Activated T-helper 1 cell treated with anti-CD3 and anti-CD28 coated beads, Interleukin-12 subunit alpha, Interleukin-12 subunit beta, Interleukin-2, Interleukin-4 antibody, amounts not matched to agents 30 ng/mL and 10 ng/mL and 1 ng/mL, durations not matched to agents 14 hours and 24 hours and 36 hours (primary cell): ENCODE measurements at regions of chr20 and their contacts with region 1.

Region 1: DNA sequence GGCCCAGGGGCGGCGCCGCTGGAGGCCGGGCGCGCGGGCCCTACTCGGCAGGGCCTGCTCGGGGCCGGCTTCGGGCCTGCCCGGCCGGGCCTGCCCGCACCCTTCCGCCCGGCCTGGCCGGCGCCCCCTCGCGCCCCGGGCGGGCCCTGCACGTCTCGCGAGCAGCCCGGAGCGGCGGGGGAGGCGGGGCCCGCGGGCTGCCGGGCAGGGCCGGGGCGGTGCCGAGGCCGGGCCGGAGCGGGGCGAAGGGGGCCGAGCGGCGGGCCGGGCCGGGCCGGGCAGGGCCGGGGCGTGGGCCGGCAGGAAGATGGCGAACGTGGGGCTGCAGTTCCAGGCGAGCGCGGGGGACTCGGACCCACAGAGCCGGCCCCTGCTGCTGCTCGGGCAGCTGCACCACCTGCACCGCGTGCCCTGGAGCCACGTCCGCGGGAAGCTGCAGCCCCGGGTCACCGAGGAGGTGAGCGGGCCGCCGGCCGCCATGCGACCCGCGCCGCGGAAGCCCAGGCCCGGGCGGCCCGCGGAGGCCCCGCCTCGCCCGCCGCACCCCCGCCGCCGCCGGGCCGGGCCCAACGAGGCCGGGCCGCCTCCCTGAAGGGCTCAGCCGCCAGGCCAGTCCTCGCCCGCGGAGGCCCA is at the start of gene NPEPL1:
- DNase-seq: peak; percentile 62
- H3K4me3 Mint-ChIP-seq: peak within 1 kb of the TSS; percentile 82
- H3K27ac Mint-ChIP-seq: peak within 1 kb of the TSS; percentile 81
- H3K4me1 Mint-ChIP-seq: peaks cover 10% of the 10 kb centered on the region
- H3K27me3 Mint-ChIP-seq: no peaks in the 10 kb centered on the region
- total RNA-seq, gene NPEPL1: 20.6 and 22.9 TPM in 2 replicates

Region 2: GRCh38 chr20:57398231-57398821 is 1294.4 kb before region 1 on chr20:
- intact Hi-C with region 1: loop called (anchors 5 kb)
- DNase-seq: peak; percentile 69
- H3K4me3 Mint-ChIP-seq: peak overlapping the region; percentile 85
- H3K27ac Mint-ChIP-seq: peak overlapping the region; percentile 94
- H3K4me1 Mint-ChIP-seq: peaks cover 62% of the 10 kb centered on the region
- H3K27me3 Mint-ChIP-seq: no peaks in the 10 kb centered on the region

Region 3: GRCh38 chr20:58659841-58660240 is 32.9 kb before region 1 on chr20:
- intact Hi-C with region 1: loop called (anchors 2 kb)
- DNase-seq: no peak
- H3K4me3 Mint-ChIP-seq: peak overlapping the region; percentile 76
- H3K27ac Mint-ChIP-seq: peak overlapping the region; percentile 76
- H3K4me1 Mint-ChIP-seq: peaks cover 83% of the 10 kb centered on the region
- H3K27me3 Mint-ChIP-seq: no peaks in the 10 kb centered on the region